ENCODE measurements at regions of chr3 and their contacts with region 1.

Region 1: DNA sequence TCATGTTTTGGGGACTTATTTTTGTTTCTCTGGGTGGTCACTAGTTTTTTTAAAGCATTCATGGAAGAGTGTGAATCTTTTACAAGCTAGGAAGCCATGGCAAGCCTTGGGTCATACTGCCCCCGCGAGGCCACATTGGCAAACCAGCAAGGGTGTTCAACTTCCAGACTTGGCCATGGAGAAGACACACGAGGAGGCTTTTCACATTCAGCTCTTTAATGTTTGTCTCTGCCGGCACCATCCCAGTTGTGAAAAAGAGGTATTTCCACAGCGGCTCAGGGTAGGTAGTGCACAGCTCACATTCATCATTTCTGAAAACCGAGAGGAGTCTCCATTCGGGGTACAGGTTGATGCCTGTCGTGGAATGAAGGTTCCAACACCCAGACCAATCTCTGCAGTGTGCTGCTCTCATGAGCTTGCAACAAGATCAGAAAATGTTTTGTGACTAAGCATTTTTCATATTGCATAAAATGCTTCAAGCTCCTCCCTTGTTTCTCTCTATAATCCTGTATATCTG is 7.7 kb downstream of the CCR5 start:
- DNase-seq: peak; percentile 57 to 66
- ATAC-seq: peak in 3 of 8 donors; percentile 52 to 73 (median 67)
- H3K4me3 ChIP-seq: no peak overlapping the region
- H3K27ac ChIP-seq: no peak overlapping the region
- H3K4me1 ChIP-seq: peaks cover 0 to 23% (median 5%) of the 10 kb centered on the region in 9 donors
- H3K27me3 ChIP-seq: peaks cover 0 to 17% (median 0%) of the 10 kb centered on the region in 7 donors
- CTCF ChIP-seq: peak; percentile 29 to 72 (median 59)

Region 2: DNA sequence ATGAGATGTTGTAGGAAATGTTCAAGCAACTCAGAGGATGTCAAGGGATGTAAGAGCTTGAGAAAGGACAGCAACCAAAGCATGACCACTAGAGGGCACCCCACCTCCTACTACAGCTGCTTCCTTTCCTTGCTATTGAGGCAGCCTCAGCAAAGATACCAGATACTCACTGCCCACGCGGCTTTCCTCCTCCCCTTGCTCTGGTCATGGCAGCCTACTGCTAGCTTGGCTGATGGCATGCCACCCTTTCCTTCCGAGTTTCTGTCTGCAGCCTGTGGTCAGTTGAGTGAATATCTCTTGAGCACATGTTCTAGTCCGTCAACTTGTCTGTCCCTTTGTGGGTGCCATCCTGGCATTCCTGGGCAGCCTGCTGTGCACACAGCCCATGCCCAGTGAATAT is 439.6 kb before region 1 on chr3:
- intact Hi-C with region 1: loop called in 2 of 10 experiments (anchors 10 kb)
- DNase-seq: peak; percentile 59 to 82
- ATAC-seq: peak; percentile 72 to 89 (median 84)
- H3K4me3 ChIP-seq: no peak overlapping the region
- H3K27ac ChIP-seq: no peak overlapping the region
- H3K4me1 ChIP-seq: peaks cover 2 to 44% (median 24%) of the 10 kb centered on the region in 9 donors
- H3K27me3 ChIP-seq: no peaks in the 10 kb centered on the region
- CTCF ChIP-seq: peak; percentile 74 to 93 (median 89)

Region 3: GRCh38 chr3:46089237-46090011 is 289.1 kb before region 1 on chr3:
- intact Hi-C with region 1: loop called in 7 of 10 experiments (anchors 5 to 10 kb)
- DNase-seq: peak; percentile 24 to 51
- ATAC-seq: peak; percentile 79 to 89 (median 86)
- H3K4me3 ChIP-seq: no peak overlapping the region
- H3K27ac ChIP-seq: peak overlapping the region in 4 of 10 donors; percentile 23 to 90 (median 58)
- H3K4me1 ChIP-seq: peaks cover 0 to 76% (median 0%) of the 10 kb centered on the region in 9 donors
- H3K27me3 ChIP-seq: no peaks in the 10 kb centered on the region
- CTCF ChIP-seq: no peak

Region 4: GRCh38 chr3:46214751-46215352 is 163.6 kb before region 1 on chr3:
- intact Hi-C with region 1: loop called in 1 of 10 experiments (anchors 10 kb)
- DNase-seq: no peak
- ATAC-seq: no peak
- H3K4me3 ChIP-seq: no peak overlapping the region
- H3K27ac ChIP-seq: no peak overlapping the region
- H3K4me1 ChIP-seq: peaks cover 0 to 26% (median 0%) of the 10 kb centered on the region in 9 donors
- H3K27me3 ChIP-seq: peaks cover 0 to 27% (median 23%) of the 10 kb centered on the region in 7 donors
- CTCF ChIP-seq: peak in 2 of 9 donors; percentile 6 to 36

Region 5: DNA sequence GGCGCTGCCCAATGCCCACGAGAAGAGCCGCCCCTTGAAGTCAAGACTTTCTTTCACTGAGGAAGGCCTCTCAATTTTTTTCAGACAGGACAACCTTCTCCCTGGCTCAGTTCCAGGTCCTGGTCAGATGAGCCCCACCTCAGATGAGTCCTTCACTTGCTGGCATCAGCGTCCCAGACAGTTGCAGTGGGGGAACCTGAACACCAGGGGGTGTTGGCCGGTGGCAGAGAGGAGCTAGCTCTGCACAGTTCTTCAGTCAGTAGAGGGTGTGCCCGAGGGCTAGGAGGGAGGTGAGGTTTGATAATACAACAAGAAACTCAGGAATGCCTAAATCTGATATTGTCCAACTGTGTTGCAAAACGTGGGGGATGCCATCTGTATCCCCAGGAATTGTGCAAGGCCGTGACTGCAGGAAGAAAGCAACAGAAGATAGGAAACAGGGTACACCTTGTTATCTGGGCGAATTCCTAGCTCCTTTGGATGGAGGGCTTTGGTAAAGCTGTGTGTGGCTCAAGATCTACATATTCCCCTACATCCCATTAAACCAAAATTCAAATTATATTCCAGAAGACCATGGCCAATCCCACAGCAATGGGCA is 101.9 kb before region 1 on chr3:
- intact Hi-C with region 1: loop called in 2 of 10 experiments (anchors 2 to 5 kb)
- DNase-seq: peak; percentile 49 to 61
- ATAC-seq: peak in 7 of 8 donors; percentile 47 to 80 (median 69)
- H3K4me3 ChIP-seq: no peak overlapping the region
- H3K27ac ChIP-seq: peak overlapping the region in 1 of 10 donors; percentile 20
- H3K4me1 ChIP-seq: peaks cover 0 to 18% (median 0%) of the 10 kb centered on the region in 9 donors
- H3K27me3 ChIP-seq: peaks cover 0 to 10% (median 0%) of the 10 kb centered on the region in 7 donors
- CTCF ChIP-seq: peak; percentile 25 to 88 (median 62)

Region 6: DNA sequence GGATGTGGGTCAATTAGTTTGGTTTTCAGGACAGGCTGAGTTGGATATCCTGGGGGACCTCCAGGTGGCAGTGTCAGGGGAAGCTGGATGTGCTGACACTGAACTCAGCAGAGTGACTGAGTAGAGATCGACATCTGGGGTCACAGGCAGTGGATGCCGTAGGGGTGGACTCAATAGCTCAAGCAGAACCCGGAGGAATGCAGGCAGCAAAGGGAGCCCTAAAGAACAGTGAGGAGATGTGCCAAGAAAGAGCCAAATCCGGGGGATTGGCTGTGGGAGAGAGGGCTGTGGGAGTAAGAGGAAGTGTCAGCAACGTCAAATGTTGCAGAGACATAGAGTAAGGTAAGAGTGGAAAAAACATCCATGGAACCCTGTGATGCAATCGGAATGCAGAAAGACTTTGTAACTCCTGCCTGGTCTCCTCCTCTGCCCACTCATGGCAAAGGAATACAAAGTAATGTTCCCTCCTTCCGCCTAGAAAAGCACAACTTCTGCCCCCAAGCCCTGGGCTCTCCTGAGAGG is 16.8 kb after region 1 on chr3:
- intact Hi-C with region 1: no loop called
- DNase-seq: no peak
- ATAC-seq: peak in 6 of 8 donors; percentile 11 to 46 (median 30)
- H3K4me3 ChIP-seq: no peak overlapping the region
- H3K27ac ChIP-seq: peak overlapping the region in 1 of 10 donors; percentile 62
- H3K4me1 ChIP-seq: peaks cover 0 to 55% (median 0%) of the 10 kb centered on the region in 9 donors
- H3K27me3 ChIP-seq: no peaks in the 10 kb centered on the region
- CTCF ChIP-seq: no peak

Region 7: GRCh38 chr3:46500656-46501635 is 122.5 kb after region 1 on chr3:
- intact Hi-C with region 1: no loop called
- DNase-seq: no peak
- ATAC-seq: no peak
- H3K4me3 ChIP-seq: no peak overlapping the region
- H3K27ac ChIP-seq: no peak overlapping the region
- H3K4me1 ChIP-seq: peaks cover 0 to 35% (median 8%) of the 10 kb centered on the region in 9 donors
- H3K27me3 ChIP-seq: no peaks in the 10 kb centered on the region
- CTCF ChIP-seq: no peak

Region 8: DNA sequence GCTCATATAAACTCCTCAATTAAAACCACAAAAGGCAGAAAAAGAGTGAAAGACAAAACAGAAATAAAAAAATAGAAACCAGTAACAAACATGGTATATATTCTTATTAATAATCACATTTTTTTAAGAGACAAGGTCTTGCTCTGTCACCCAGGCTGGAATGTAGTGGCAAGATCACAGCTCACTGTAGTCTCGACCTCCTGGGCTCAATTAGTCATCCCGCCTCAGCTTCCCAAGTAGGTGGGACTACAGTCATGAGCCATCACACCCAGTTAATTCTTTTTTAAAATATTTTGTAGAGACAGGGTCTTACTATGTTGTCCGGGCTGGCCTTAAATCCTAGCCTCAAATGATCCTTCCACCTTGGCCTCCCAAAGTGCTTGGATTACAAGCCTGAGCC is 271.0 kb after region 1 on chr3:
- intact Hi-C with region 1: no loop called
- DNase-seq: no peak
- ATAC-seq: no peak
- H3K4me3 ChIP-seq: no peak overlapping the region
- H3K27ac ChIP-seq: no peak overlapping the region
- H3K4me1 ChIP-seq: peaks cover 0 to 4% (median 0%) of the 10 kb centered on the region in 9 donors
- H3K27me3 ChIP-seq: peaks cover 0 to 7% (median 0%) of the 10 kb centered on the region in 7 donors
- CTCF ChIP-seq: no peak

Measured in heart right ventricle (tissue), 16 donors.